Vagina (tissue), 2 donors: ENCODE measurements at regions of chr2 and their contacts with region 1.

Region 1: GRCh38 chr2:159118115-159118858 is 149.8 kb downstream of the TANC1 start:
- DNase-seq: peak in 1 of 2 donors; percentile 89
- H3K4me3 ChIP-seq: no peak overlapping the region
- H3K27ac ChIP-seq: no peak overlapping the region
- H3K4me1 ChIP-seq: peaks cover 22% of the 10 kb centered on the region
- H3K27me3 ChIP-seq: no peaks in the 10 kb centered on the region
- CTCF ChIP-seq: peak; percentile 81 to 85 (median 84)
- POLR2A ChIP-seq: no peak

Region 2: GRCh38 chr2:158903711-158904443 is 214.4 kb before region 1 on chr2:
- intact Hi-C with region 1: loop called (anchors 5 kb)
- DNase-seq: no peak
- H3K4me3 ChIP-seq: no peak overlapping the region
- H3K27ac ChIP-seq: no peak overlapping the region
- H3K4me1 ChIP-seq: no peaks in the 10 kb centered on the region
- H3K27me3 ChIP-seq: no peaks in the 10 kb centered on the region
- CTCF ChIP-seq: no peak
- POLR2A ChIP-seq: no peak

Region 3: DNA sequence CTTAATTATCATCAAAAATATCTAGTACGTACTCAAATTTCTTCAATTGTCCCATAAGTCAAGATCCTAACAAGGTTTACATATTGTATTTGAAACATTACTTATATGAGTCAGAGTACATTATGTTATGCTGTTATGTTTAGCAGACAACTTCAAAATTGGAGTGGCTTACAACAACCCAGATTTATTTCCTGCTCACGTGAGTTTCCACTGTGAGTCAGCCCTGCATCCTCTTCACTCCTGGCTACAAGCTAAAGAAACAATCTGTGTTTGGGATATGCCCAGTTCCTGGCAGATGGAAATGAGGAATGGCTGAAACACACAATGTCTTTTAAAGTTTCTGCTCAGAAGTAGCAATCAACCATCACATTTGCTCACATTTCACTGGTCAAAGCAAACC is 181.3 kb before region 1 on chr2:
- intact Hi-C with region 1: no loop called
- DNase-seq: no peak
- H3K4me3 ChIP-seq: no peak overlapping the region
- H3K27ac ChIP-seq: no peak overlapping the region
- H3K4me1 ChIP-seq: no peaks in the 10 kb centered on the region
- H3K27me3 ChIP-seq: no peaks in the 10 kb centered on the region
- CTCF ChIP-seq: no peak
- POLR2A ChIP-seq: no peak